Activated T-helper 1 cell treated with anti-CD3 and anti-CD28 coated beads, Interleukin-12 subunit alpha, Interleukin-12 subunit beta, Interleukin-2, Interleukin-4 antibody, amounts not matched to agents 30 ng/mL and 10 ng/mL and 1 ng/mL, durations not matched to agents 14 hours and 24 hours and 36 hours (primary cell): ENCODE measurements at regions of chr1 and their contacts with region 1.

Region 1: DNA sequence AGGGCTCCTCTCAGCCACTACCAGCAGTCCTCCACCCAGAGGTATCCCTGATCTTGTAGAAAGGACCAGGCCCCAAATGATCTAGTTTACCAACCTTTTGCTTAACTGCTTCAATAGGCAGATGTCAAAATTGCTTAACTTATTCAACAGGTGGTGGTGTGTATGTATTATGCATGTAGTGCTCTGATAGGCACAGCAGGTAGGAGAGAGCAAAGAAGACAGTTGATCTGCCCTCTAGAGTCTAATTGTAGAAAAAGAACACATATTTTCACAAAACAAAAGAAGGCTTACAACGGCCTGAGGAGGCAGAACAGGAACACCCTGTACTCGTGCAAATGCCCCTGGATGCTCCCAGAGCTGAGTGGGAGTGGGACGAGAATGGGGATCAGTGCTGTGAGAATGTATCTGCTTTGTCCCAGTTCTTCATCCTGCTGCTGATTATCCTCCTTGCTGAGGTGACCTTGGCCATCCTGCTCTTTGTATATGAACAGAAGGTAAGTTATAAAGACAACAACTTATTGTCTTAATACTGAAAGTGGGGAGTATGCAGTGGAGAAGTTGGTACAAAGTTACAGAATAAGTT is 21.1 kb downstream of the CD53 start:
- DNase-seq: no peak
- H3K4me3 Mint-ChIP-seq: no peak overlapping the region
- H3K27ac Mint-ChIP-seq: peak overlapping the region; percentile 78
- H3K4me1 Mint-ChIP-seq: peaks cover 94% of the 10 kb centered on the region
- H3K27me3 Mint-ChIP-seq: no peaks in the 10 kb centered on the region

Region 2: GRCh38 chr1:110864287-110864686 is 29.7 kb before region 1 on chr1:
- intact Hi-C with region 1: loop called (anchors 5 kb)
- DNase-seq: no peak
- H3K4me3 Mint-ChIP-seq: no peak overlapping the region
- H3K27ac Mint-ChIP-seq: no peak overlapping the region
- H3K4me1 Mint-ChIP-seq: peaks cover 15% of the 10 kb centered on the region
- H3K27me3 Mint-ChIP-seq: no peaks in the 10 kb centered on the region

Region 3: GRCh38 chr1:110916669-110917306 is 22.8 kb after region 1 on chr1:
- intact Hi-C with region 1: loop called (anchors 2 kb)
- DNase-seq: peak; percentile 36
- H3K4me3 Mint-ChIP-seq: peak overlapping the region; percentile 56
- H3K27ac Mint-ChIP-seq: peak overlapping the region; percentile 71
- H3K4me1 Mint-ChIP-seq: peaks cover 19% of the 10 kb centered on the region
- H3K27me3 Mint-ChIP-seq: peaks cover 2% of the 10 kb centered on the region